Gastrocnemius medialis (tissue), 4 donors: ENCODE measurements at regions of chr1 and their contacts with region 1.

Region 1: DNA sequence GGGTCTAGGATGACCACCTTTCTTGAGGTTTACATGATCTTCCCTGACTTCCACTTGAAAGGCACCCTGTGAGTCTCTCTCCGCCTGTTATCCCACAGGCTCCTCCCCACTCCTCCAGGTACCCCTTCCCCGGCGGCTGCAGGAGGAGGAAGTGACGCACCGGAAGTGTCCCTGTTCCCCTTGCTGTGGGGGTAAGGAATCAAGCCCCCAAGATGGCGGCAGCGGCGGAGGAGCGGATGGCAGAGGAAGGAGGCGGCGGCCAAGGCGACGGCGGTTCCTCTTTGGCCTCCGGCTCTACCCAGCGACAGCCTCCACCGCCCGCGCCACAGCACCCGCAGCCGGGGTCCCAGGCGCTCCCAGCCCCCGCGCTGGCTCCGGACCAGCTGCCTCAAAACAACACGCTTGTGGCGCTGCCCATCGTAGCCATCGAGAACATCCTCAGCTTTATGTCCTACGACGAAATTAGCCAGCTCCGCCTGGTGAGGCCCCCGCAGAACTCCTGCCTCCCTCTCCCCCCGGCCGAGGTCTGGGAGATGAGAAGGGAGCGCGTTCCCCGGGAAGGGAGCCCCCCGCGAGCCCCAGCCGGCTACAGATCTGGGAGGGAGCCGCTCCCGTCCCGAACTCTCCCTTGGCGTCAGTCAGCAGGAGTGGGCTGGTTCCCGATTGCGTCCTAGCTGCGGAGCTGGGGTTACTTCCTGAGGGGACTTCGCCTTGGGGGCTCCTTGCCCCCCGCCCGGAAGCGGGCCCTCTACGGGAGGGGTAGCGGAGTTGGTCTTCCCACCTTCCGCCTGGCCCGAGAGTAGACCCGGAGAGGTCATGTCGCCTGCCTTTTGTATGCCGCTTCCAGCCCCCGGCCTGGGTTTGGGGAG is at the start of gene FBXO28:
- DNase-seq: peak; percentile 92 to 94
- ATAC-seq: peak; percentile 98 to 99
- H3K4me3 ChIP-seq: peak within 1 kb of the TSS; percentile 74 to 98 (median 88)
- H3K27ac ChIP-seq: peak within 1 kb of the TSS; percentile 85 to 96 (median 92)
- H3K4me1 ChIP-seq: peaks cover 21 to 23% of the 10 kb centered on the region in 2 donors
- H3K27me3 ChIP-seq: peaks cover 0 to 7% (median 3%) of the 10 kb centered on the region in 3 donors
- CTCF ChIP-seq: no peak
- POLR2A ChIP-seq: peak; percentile 78 to 81
- total RNA-seq, gene FBXO28: 20.2 to 30.9 (median 27.4) TPM

Region 2: GRCh38 chr1:223609977-223610376 is 504.2 kb before region 1 on chr1:
- in situ Hi-C with region 1: no loop called
- intact Hi-C with region 1: no loop called
- DNase-seq: no peak
- ATAC-seq: no peak
- H3K4me3 ChIP-seq: no peak overlapping the region
- H3K27ac ChIP-seq: no peak overlapping the region
- H3K4me1 ChIP-seq: no peaks in the 10 kb centered on the region
- H3K27me3 ChIP-seq: no peaks in the 10 kb centered on the region
- CTCF ChIP-seq: no peak
- POLR2A ChIP-seq: no peak

Region 3: DNA sequence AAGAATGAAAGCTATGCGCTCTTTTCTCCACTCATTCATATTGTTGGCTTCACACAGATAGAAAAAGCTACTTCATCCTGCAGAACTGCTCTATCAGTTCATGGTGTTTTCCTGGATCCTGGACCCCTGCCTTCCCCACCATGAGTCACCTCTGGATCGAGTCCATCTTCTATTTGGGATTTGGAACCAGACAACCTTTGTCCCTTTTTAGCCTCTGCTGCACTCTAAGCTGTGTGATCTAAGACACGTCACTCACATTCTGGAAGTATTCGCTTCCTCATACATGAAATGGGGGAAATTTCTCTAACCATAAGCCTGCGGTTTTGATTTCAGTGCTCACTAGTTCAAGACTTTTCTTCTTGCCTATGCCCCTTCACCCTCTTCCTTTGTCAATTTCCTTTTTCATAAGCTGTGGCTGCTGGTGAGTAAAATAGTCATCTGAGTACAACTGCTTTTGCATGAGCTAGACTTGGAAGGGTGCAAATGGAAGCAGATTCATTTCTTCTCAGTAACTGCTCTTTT is 54.8 kb after region 1 on chr1:
- in situ Hi-C with region 1: no loop called
- intact Hi-C with region 1: no loop called
- DNase-seq: peak in 1 of 2 donors; percentile 22
- ATAC-seq: peak; percentile 60 to 81
- H3K4me3 ChIP-seq: no peak overlapping the region
- H3K27ac ChIP-seq: peak overlapping the region in 2 of 4 donors; percentile 1 to 24
- H3K4me1 ChIP-seq: peaks cover 3 to 9% of the 10 kb centered on the region in 2 donors
- H3K27me3 ChIP-seq: no peaks in the 10 kb centered on the region
- CTCF ChIP-seq: no peak
- POLR2A ChIP-seq: no peak

Region 4: GRCh38 chr1:224182866-224183590 is 68.9 kb after region 1 on chr1 and contains the start of gene DEGS1:
- in situ Hi-C with region 1: no loop called
- intact Hi-C with region 1: loop called (anchors 2 kb)
- DNase-seq: peak; percentile 63 to 82
- ATAC-seq: peak; percentile 92 to 94
- H3K4me3 ChIP-seq: peak within 1 kb of the TSS; percentile 69 to 98 (median 88)
- H3K27ac ChIP-seq: peak within 1 kb of the TSS; percentile 82 to 99 (median 96)
- H3K4me1 ChIP-seq: peaks cover 10 to 19% of the 10 kb centered on the region in 2 donors
- H3K27me3 ChIP-seq: no peaks in the 10 kb centered on the region
- CTCF ChIP-seq: no peak
- POLR2A ChIP-seq: peak; percentile 79 to 92
- total RNA-seq, gene DEGS1: 21.5 to 26.3 (median 24.2) TPM

Region 5: DNA sequence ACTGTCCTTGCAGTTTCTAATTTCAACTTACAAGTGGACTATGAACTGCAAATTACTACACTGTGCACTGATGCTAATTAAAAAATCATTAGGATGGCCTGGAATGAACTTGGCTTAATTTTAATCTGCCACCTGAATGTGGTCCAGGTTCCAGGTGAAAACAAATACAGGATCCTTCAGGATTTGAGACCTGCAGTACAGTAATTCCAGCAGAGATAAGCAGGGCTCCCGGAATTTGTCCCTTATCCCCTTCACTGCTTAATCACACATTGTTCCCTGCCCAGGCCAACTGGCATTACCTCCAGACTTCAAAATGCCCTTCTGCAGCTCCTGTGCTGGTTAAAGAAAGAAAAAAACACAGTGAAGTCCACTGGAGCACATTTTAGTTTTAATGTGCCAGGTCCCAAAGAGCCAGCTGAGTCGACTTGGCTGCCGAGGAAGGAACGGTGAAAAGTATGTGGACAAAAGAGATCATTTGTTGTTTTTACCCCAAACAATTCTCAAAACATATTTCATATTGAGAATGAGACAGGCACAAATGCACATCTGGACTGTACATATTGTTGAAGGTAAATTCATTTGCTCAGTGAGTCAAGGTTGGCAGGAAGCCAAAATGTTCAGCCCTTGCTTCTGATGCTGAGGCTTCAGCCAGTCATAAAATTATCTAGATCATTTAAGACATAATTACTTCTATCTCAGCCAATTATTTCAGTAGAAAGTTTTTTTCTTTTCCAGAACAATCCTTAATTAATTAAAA is 97.2 kb after region 1 on chr1:
- in situ Hi-C with region 1: no loop called
- intact Hi-C with region 1: loop called (anchors 10 kb)
- DNase-seq: no peak
- ATAC-seq: no peak
- H3K4me3 ChIP-seq: no peak overlapping the region
- H3K27ac ChIP-seq: peak overlapping the region in 2 of 4 donors; percentile 16 to 56
- H3K4me1 ChIP-seq: peaks cover 6 to 12% of the 10 kb centered on the region in 2 donors
- H3K27me3 ChIP-seq: no peaks in the 10 kb centered on the region
- CTCF ChIP-seq: no peak
- POLR2A ChIP-seq: no peak

Region 6: DNA sequence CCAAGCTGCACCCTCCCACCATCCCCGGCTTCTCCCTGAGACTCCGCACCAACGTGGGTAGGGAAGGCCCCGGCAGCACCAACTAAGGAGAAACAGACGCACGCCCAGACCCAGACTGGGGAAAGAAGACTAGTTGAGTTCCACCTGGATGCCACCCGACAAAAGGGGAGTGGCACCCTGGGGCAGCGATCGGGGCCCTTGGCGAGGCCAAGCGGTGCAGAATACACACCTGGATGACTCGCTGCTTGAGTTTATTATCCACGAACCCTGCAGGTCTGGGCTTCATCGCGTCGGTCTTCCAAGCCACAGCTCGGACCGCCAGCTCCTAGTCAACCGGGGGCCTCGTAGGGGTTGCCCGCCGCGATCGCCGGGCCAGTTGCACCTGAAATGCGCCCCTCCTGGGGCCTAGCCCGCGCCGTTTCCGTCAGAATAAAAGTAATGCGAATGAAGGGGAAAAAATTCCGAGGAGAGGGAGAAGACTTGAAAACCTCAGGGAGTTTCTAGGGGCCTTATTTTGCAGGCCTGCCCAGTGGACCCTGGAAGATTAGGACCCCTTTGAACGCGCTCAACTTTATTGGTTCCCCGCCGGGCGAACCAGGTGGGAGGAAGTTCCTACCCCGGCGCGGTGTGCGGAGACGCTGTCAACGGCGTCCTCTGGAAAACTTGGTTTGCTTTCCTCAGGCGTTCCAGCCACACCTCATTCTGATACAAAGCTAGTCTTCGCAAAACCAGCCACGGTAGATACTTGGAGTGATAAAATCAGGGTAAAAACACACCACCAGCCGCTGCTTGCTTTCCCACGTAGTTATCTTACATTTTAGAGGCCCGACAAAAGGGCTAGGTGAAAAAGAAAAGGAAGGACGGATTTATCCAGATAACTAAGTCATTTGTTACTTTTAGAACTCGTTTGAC is 215.9 kb after region 1 on chr1 and contains the start of gene NVL:
- in situ Hi-C with region 1: loop called (anchors 10 to 25 kb)
- intact Hi-C with region 1: loop called (anchors 1 kb)
- DNase-seq: peak; percentile 78 to 82
- ATAC-seq: peak; percentile 96 to 97
- H3K4me3 ChIP-seq: peak within 1 kb of the TSS; percentile 87 to 96 (median 89)
- H3K27ac ChIP-seq: peak within 1 kb of the TSS; percentile 87 to 95 (median 91)
- H3K4me1 ChIP-seq: peaks cover 17 to 19% of the 10 kb centered on the region in 2 donors
- H3K27me3 ChIP-seq: no peaks in the 10 kb centered on the region
- CTCF ChIP-seq: no peak
- POLR2A ChIP-seq: peak; percentile 50 to 53
- total RNA-seq, gene NVL: 6.5 to 32.5 (median 7.7) TPM

Region 7: GRCh38 chr1:224459966-224460365 is 345.8 kb after region 1 on chr1:
- in situ Hi-C with region 1: loop called in 3 of 4 experiments (anchors 5 to 10 kb)
- intact Hi-C with region 1: loop called (anchors 1 kb)
- DNase-seq: no peak
- ATAC-seq: no peak
- H3K4me3 ChIP-seq: no peak overlapping the region
- H3K27ac ChIP-seq: peak overlapping the region in 1 of 4 donors; percentile 35
- H3K4me1 ChIP-seq: peaks cover 16 to 26% of the 10 kb centered on the region in 2 donors
- H3K27me3 ChIP-seq: no peaks in the 10 kb centered on the region
- CTCF ChIP-seq: no peak
- POLR2A ChIP-seq: no peak